ENCODE measurements at regions of chr1 and their contacts with region 1.

Region 1: GRCh38 chr1:112706908-112707663 is at the start of gene RHOC:
- DNase-seq: peak; percentile 62 to 94
- H3K4me3 ChIP-seq: peak within 1 kb of the TSS; percentile 93 to 99
- H3K27ac ChIP-seq: peak within 1 kb of the TSS; percentile 99
- H3K4me1 ChIP-seq: peaks cover 10 to 16% of the 10 kb centered on the region in 2 donors
- H3K27me3 ChIP-seq: no peaks in the 10 kb centered on the region
- CTCF ChIP-seq: peak; percentile 90 to 93 (median 92)
- total RNA-seq, gene RHOC: 379 TPM

Region 2: DNA sequence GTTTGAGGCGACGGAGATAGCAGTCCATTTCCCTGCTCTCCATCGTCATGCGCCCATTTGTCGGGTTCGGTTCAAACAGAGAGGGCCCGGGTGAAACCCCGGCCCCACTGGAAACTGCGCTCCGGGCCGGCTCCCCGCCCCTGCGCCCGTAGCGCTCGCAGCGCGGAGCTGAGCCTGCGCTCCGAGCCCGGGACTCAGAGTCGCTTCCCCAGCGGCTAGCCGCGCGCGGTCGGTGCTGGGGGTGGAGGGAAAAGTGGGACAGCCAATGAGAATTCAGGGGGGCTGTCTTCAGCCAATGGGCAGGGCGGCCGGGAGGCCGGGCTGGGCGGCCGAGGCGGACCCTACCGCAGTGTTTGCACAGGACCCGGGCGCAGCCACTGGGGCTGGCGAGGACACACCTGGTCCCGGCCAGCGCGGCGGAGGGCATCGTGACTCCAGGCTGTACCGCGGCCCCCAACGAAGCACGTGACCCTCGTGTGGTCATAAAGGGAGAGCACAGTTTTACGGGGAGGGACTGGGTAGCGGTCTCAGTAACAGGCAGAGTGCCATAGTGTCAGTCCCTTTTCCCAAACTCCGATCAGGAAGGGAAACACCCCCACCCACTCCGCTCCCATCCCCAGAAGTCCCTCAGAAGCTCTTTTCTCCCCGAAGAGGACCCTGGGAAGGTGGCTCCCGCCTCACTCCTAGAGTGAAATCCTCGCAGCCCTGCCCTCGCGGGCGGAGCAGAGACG is 967.7 kb before region 1 on chr1 and contains the start of gene INKA2:
- intact Hi-C with region 1: loop called (anchors 10 kb)
- DNase-seq: peak; percentile 77 to 93
- H3K4me3 ChIP-seq: peak within 1 kb of the TSS; percentile 78 to 88
- H3K27ac ChIP-seq: peak within 1 kb of the TSS; percentile 95
- H3K4me1 ChIP-seq: peaks cover 0 to 14% of the 10 kb centered on the region in 2 donors
- H3K27me3 ChIP-seq: no peaks in the 10 kb centered on the region
- CTCF ChIP-seq: peak in 1 of 3 experiments; percentile 25
- total RNA-seq, gene INKA2: not detected

Region 3: DNA sequence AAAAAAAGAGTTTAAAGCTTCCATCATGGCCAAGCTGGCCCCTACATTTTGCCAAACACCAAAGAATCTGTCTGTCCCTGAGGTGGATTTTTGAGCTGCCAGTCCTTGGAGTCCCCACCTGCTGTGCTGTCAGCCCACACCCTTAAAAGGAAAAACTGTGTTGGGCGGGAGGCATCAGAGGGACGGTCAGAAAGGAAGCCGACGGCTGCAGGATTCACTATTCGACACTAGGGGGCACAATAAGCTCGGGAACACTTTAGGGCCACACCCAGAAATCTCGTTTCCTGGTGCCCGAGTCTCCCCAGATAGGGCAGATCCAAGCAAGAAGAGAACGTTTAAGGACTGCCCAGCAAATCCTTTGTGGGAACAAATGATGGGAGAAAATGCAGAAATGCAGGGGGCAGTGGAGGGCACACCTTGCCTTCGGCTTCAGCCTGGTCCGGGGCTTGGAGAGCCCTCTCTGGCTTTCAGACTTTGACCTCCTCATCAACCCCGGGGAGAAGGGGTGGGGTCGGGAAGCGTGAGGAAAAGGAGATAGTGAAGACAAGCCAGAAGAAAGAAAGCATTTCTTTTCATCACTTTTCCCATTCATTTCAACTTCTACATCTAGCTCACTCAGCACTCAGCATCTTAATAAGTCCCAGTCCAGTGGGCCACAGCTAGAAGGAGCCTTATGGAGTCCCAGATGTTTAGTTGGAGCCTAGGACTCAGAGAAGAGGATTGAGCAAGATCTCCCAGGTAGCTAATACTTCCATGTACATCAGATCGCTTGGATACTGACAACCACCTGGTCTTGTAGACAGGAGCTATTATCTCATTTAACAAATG is 316.1 kb before region 1 on chr1:
- intact Hi-C with region 1: loop called (anchors 2 kb)
- DNase-seq: peak; percentile 71 to 97
- H3K4me3 ChIP-seq: peak overlapping the region; percentile 48 to 64
- H3K27ac ChIP-seq: peak overlapping the region; percentile 92 to 98
- H3K4me1 ChIP-seq: peaks cover 8 to 45% of the 10 kb centered on the region in 2 donors
- H3K27me3 ChIP-seq: no peaks in the 10 kb centered on the region
- CTCF ChIP-seq: peak; percentile 90 to 96 (median 91)

Region 4: DNA sequence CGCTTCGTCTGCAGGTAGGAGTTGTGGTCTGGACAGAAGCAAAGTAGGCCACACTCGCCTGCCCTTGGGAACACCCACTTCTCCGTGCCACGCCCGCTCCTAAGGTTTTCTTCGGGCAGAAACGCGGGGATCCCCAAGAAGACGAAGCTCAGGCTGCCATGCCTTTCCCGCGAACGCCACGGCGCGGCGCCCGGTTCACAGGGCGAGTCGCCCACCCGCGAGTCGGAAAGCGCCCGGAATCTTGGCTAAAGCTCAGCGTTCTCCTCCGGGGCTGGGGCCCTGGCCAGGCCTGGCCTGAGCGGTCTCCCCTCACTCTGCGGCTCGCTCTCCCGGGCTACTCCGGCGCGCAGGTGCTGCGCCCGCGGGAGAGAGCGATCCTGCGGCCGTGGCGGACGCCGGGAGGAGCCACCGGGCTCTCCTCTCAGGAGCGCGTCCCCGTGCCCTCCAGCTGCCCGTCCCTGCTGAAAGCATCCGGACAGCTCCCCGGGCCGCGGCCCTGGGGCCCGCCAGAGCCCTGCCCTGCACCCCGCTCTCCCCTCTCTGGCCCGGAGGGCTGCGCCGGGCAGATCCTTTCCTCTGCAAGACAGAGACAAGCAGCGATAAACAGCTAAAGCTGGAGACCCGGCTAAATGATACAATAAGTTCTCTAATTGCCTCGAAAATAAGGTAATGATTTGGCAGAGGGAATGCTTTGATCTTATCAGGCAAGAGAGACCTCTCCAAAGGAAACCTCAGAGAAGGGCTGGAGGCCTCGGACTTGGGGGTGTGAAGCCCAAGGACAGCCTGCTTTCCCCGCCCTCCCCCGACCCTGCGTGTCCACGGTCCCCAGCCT is 205.1 kb before region 1 on chr1:
- intact Hi-C with region 1: loop called (anchors 5 kb)
- DNase-seq: peak in 1 of 2 donors; percentile 81
- H3K4me3 ChIP-seq: peak overlapping the region; percentile 63 to 74
- H3K27ac ChIP-seq: peak overlapping the region in 1 of 2 donors; percentile 29
- H3K4me1 ChIP-seq: no peaks in the 10 kb centered on the region
- H3K27me3 ChIP-seq: no peaks in the 10 kb centered on the region
- CTCF ChIP-seq: peak; percentile 67 to 87 (median 71)

Region 5: DNA sequence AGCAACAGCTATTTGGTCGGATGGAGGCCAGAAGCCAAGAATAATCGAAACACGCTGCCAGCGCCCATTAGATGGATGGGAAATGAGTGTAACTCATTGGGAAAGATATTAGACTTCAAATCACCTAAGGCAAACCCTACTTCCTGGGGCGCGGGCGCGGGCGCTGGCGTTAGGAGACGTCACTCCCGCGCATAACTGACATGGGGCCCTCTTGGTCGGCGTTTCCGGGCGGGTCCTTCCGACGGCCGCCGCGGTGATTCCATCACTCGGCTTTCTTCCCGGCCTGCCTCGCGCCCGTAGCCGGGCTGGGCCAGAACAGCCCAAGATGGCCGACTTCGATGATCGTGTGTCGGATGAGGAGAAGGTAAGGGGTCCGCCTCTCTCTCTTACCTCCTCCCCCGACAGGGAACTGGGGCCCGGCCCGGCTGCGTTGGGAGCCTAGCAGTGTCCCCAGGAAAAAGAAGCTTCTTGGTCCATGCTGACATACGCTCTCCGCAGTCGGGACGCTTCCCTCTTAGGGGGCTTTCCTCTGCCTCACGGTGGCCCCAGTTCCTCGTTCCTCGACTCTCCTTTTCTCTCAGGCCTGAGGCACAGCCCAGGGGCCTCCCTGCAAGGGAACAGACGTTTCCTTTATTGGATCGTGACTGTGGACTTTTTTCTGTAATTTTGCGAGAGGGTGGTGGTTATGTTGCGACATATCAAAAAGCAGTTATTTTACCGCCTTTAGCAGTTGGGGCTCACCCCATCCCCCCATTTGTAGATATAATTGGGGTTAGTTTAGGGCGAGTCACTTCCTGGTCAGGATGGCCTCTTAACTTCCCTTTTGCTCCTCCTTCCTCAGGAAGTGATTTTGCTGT is 87.3 kb before region 1 on chr1 and contains the start of gene CAPZA1:
- intact Hi-C with region 1: loop called (anchors 1 kb)
- DNase-seq: peak; percentile 72 to 95
- H3K4me3 ChIP-seq: peak within 1 kb of the TSS; percentile 83 to 84
- H3K27ac ChIP-seq: peak within 1 kb of the TSS; percentile 96 to 100
- H3K4me1 ChIP-seq: peaks cover 5 to 22% of the 10 kb centered on the region in 2 donors
- H3K27me3 ChIP-seq: no peaks in the 10 kb centered on the region
- CTCF ChIP-seq: no peak
- total RNA-seq, gene CAPZA1: 53.5 TPM

Region 6: GRCh38 chr1:113389953-113390834 is 683.1 kb after region 1 on chr1 and contains the start of gene MAGI3:
- intact Hi-C with region 1: loop called (anchors 5 kb)
- DNase-seq: peak; percentile 87 to 98
- H3K4me3 ChIP-seq: peak within 1 kb of the TSS; percentile 96 to 99
- H3K27ac ChIP-seq: peak within 1 kb of the TSS; percentile 89 to 91
- H3K4me1 ChIP-seq: peaks cover 5 to 6% of the 10 kb centered on the region in 2 donors
- H3K27me3 ChIP-seq: no peaks in the 10 kb centered on the region
- CTCF ChIP-seq: no peak
- total RNA-seq, gene MAGI3: 14.9 TPM